IMR-90 (cell line): ENCODE measurements at regions of chr22 and their contacts with region 1.

Region 1: GRCh38 chr22:50582562-50583293 is at the start of gene CHKB:
- DNase-seq: peak; percentile 96
- ATAC-seq: peak; percentile 97
- H3K4me3 ChIP-seq: peak within 1 kb of the TSS; percentile 80
- H3K27ac ChIP-seq: peak within 1 kb of the TSS; percentile 85
- H3K4me1 ChIP-seq: peaks cover 17% of the 10 kb centered on the region
- H3K27me3 ChIP-seq: no peaks in the 10 kb centered on the region
- CTCF ChIP-seq: no peak
- POLR2A ChIP-seq: peak; percentile 68; the same call in 1 of the 2 replicates
- RAD21 ChIP-seq: no peak
- total RNA-seq, gene CHKB: 7.2 and 8.1 TPM in 2 replicates

Region 2: GRCh38 chr22:50525390-50526068 is 57.2 kb before region 1 on chr22 and contains the start of gene SCO2:
- CTCF ChIA-PET with region 1: interaction called, 5 read pairs
- POLR2A ChIA-PET with region 1: interaction called, 3 read pairs
- dilution Hi-C with region 1: no loop called
- in situ Hi-C with region 1: loop called (anchors 5 kb)
- intact Hi-C with region 1: loop called (anchors 5 kb)
- DNase-seq: peak; percentile 97
- ATAC-seq: peak; percentile 71
- H3K4me3 ChIP-seq: peak within 1 kb of the TSS; percentile 84
- H3K27ac ChIP-seq: peak within 1 kb of the TSS; percentile 96
- H3K4me1 ChIP-seq: peaks cover 13% of the 10 kb centered on the region
- H3K27me3 ChIP-seq: no peaks in the 10 kb centered on the region
- CTCF ChIP-seq: peak; percentile 63
- POLR2A ChIP-seq: peak; percentile 83
- RAD21 ChIP-seq: peak; percentile 47
- total RNA-seq, gene SCO2: 1.3 and 1.7 TPM in 2 replicates

Region 3: GRCh38 chr22:50537765-50538164 is 45.0 kb before region 1 on chr22:
- CTCF ChIA-PET with region 1: interaction called, 4 read pairs
- POLR2A ChIA-PET with region 1: no interaction called
- dilution Hi-C with region 1: no loop called
- in situ Hi-C with region 1: no loop called
- intact Hi-C with region 1: loop called (anchors 2 kb)
- DNase-seq: no peak
- ATAC-seq: no peak
- H3K4me3 ChIP-seq: no peak overlapping the region
- H3K27ac ChIP-seq: no peak overlapping the region
- H3K4me1 ChIP-seq: peaks cover 12% of the 10 kb centered on the region
- H3K27me3 ChIP-seq: no peaks in the 10 kb centered on the region
- CTCF ChIP-seq: no peak
- POLR2A ChIP-seq: no peak
- RAD21 ChIP-seq: no peak

Region 4: DNA sequence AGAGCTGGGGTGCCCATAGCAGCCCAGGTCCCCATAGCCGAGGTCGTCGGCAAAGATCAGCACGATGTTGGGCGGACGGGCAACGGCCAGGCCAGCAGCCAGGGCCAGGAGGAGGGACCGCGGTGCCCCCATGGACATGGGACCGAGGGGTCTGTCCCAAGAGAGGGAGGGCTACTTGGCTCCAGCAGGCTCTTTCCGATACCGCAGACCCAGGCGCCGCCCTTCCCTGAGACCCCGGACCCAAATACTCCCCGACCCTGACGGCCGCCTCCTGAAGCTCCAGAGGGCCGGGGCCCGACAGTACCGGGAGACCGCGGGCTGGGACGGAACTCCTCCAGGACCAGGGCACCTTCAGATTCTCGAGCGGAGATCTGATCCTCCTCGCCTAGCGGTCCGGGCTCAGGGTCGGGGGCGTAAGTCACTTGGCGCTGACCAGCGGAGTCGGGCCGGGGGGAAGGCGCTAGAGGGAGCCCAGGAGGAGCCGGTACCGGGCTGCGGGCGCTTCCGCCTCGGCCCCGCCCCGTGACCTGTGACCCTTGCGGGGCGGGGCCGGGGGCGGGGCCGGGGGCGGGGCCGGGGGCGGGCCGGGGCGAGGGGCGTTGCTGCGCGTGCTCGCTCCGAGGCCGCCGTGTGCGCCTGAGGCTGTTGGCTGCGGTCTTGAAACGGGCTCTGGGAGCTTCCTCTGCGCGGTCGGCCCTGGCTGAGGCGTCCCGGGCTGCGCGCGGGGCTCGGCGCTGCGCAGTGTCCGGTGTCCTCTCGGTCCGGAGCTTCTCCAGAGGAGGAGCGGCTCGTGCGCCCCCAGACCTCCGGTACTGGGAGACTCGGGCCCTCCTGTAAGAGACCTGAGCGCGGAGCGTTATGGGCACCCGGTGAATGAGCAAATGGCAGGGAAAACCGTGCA is 45.2 kb after region 1 on chr22 and contains the start of gene ARSA:
- CTCF ChIA-PET with region 1: no interaction called
- POLR2A ChIA-PET with region 1: no interaction called
- dilution Hi-C with region 1: no loop called
- in situ Hi-C with region 1: no loop called
- intact Hi-C with region 1: loop called (anchors 2 kb)
- DNase-seq: peak; percentile 81
- ATAC-seq: peak; percentile 97
- H3K4me3 ChIP-seq: peak within 1 kb of the TSS; percentile 93
- H3K27ac ChIP-seq: peak within 1 kb of the TSS; percentile 75
- H3K4me1 ChIP-seq: peaks cover 9% of the 10 kb centered on the region; the same call in 1 of the 2 replicates
- H3K27me3 ChIP-seq: peaks cover under 1% of the 10 kb centered on the region
- CTCF ChIP-seq: peak; percentile 43
- POLR2A ChIP-seq: no peak
- RAD21 ChIP-seq: peak; percentile 42
- total RNA-seq, gene ARSA: 3.1 and 3.4 TPM in 2 replicates